ENCODE measurements at regions of chr16 and their contacts with region 1.

Region 1: DNA sequence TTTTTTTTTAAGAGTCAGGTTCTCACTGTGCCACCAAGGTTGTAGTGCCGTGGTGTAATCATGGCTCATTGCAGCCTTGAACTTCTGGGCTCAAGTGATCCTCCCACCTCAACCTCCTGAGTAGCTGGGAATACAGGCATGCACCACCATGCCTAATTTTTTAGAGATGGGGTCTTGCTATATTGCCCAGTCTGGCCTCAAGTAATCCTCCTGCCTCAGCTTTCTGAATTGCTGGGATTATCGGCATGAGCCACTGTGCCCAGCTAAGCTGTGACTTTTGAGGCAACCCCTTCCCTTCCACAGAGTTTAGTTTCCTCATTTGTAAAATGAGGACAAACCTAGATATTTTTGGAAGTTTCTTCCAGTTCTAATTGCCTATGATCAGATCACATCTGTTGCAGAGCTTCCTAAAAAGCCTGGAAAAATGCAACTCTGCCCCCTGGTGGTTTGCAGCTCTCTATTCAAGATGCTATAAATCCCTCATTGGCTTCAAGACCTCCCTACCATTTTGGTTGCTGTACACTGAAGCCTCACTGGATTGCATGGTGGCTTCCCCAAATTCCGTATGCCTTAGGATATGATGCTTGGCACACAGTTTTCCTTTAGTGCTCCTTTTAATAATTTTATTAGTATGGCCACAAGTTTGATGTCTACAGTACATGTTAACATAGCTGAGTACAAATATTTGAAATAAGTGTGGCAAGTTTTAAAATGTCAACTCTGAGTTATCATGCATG is 19.3 kb downstream of the GDE1 start:
- DNase-seq: no peak
- ATAC-seq: peak; percentile 84
- H3K4me3 ChIP-seq: no peak overlapping the region
- H3K27ac ChIP-seq: no peak overlapping the region
- H3K4me1 ChIP-seq: no peaks in the 10 kb centered on the region
- H3K27me3 ChIP-seq: no peaks in the 10 kb centered on the region
- CTCF ChIP-seq: peak; percentile 65 to 68 (median 67)
- EP300 ChIP-seq: no peak
- POLR2A ChIP-seq: no peak
- RAD21 ChIP-seq: peak; percentile 73

Region 2: GRCh38 chr16:19086322-19087199 is 416.0 kb before region 1 on chr16:
- CTCF ChIA-PET with region 1: interaction called, 23 read pairs
- POLR2A ChIA-PET with region 1: interaction called, 3 read pairs
- RAD21 ChIA-PET with region 1: interaction called, 5 read pairs
- SMC1A ChIA-PET with region 1: interaction called, 13 read pairs
- in situ Hi-C with region 1: loop called (anchors 5 kb)
- intact Hi-C with region 1: loop called (anchors 1 kb)
- DNase-seq: peak; percentile 20
- ATAC-seq: peak; percentile 100
- H3K4me3 ChIP-seq: peak overlapping the region; percentile 64; the same call in 1 of the 2 replicates
- H3K27ac ChIP-seq: no peak overlapping the region
- H3K4me1 ChIP-seq: peaks cover 3% of the 10 kb centered on the region; the same call in 1 of the 2 replicates
- H3K27me3 ChIP-seq: no peaks in the 10 kb centered on the region
- CTCF ChIP-seq: peak; percentile 95 to 96 (median 95)
- EP300 ChIP-seq: no peak
- POLR2A ChIP-seq: peak; percentile 43; the same call in 1 of the 2 replicates
- RAD21 ChIP-seq: peak; percentile 97

Region 3: GRCh38 chr16:19167710-19168370 is 334.7 kb before region 1 on chr16 and contains the start of gene SYT17:
- CTCF ChIA-PET with region 1: interaction called, 3 read pairs
- POLR2A ChIA-PET with region 1: no interaction called
- RAD21 ChIA-PET with region 1: interaction called, 4 read pairs
- SMC1A ChIA-PET with region 1: no interaction called
- in situ Hi-C with region 1: no loop called
- intact Hi-C with region 1: loop called (anchors 10 kb)
- DNase-seq: no peak
- ATAC-seq: peak; percentile 98
- H3K4me3 ChIP-seq: peak within 1 kb of the TSS; percentile 21; the same call in 1 of the 2 replicates
- H3K27ac ChIP-seq: no peak within 1 kb of the TSS
- H3K4me1 ChIP-seq: no peaks in the 10 kb centered on the region
- H3K27me3 ChIP-seq: no peaks in the 10 kb centered on the region; a peak in 1 of 4 replicates
- CTCF ChIP-seq: peak; percentile 68 to 83 (median 78)
- EP300 ChIP-seq: no peak
- POLR2A ChIP-seq: no peak
- RAD21 ChIP-seq: peak; percentile 75
- polyA plus RNA-seq, gene SYT17: 10.2 to 12.3 TPM

Region 4: DNA sequence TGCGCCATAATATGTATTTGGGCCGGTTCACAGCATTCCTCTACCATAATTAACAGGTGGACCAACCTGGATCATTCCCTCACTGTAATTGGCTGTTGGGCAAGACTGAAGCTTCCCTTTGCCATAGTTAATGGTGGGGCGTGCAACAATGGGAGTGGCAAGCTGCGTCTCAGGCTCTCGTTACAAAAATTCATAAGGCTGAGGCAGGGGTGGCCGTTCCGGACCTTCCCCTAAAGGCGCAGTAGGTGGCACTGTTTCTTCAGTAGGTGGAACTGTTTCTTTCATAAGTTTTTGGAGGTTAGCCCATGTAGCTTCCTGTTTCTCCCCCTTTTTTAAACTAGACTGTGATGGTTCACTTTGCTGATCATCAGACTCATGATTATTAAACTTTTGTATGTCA is 101.9 kb before region 1 on chr16:
- CTCF ChIA-PET with region 1: interaction called, 29 read pairs
- POLR2A ChIA-PET with region 1: no interaction called
- RAD21 ChIA-PET with region 1: no interaction called
- SMC1A ChIA-PET with region 1: interaction called, 7 read pairs
- in situ Hi-C with region 1: no loop called
- intact Hi-C with region 1: no loop called
- DNase-seq: no peak
- ATAC-seq: peak; percentile 40; the same call in 2 of the 3 replicates
- H3K4me3 ChIP-seq: no peak overlapping the region
- H3K27ac ChIP-seq: no peak overlapping the region
- H3K4me1 ChIP-seq: no peaks in the 10 kb centered on the region
- H3K27me3 ChIP-seq: peaks cover 0 to 2% of the 10 kb centered on the region in 2 experiments; a peak in 1 of 4 replicates
- CTCF ChIP-seq: peak; percentile 27 to 39 (median 27); a peak in 4 of 6 replicates
- EP300 ChIP-seq: no peak
- POLR2A ChIP-seq: no peak
- RAD21 ChIP-seq: peak; percentile 28

Region 5: GRCh38 chr16:19432429-19432828 is 70.1 kb before region 1 on chr16:
- CTCF ChIA-PET with region 1: no interaction called
- POLR2A ChIA-PET with region 1: no interaction called
- RAD21 ChIA-PET with region 1: no interaction called
- SMC1A ChIA-PET with region 1: no interaction called
- in situ Hi-C with region 1: no loop called
- intact Hi-C with region 1: no loop called
- DNase-seq: no peak
- ATAC-seq: no peak
- H3K4me3 ChIP-seq: no peak overlapping the region
- H3K27ac ChIP-seq: no peak overlapping the region
- H3K4me1 ChIP-seq: peaks cover 6% of the 10 kb centered on the region; the same call in 1 of the 2 replicates
- H3K27me3 ChIP-seq: no peaks in the 10 kb centered on the region
- CTCF ChIP-seq: no peak
- EP300 ChIP-seq: no peak
- POLR2A ChIP-seq: no peak
- RAD21 ChIP-seq: no peak

Region 6: DNA sequence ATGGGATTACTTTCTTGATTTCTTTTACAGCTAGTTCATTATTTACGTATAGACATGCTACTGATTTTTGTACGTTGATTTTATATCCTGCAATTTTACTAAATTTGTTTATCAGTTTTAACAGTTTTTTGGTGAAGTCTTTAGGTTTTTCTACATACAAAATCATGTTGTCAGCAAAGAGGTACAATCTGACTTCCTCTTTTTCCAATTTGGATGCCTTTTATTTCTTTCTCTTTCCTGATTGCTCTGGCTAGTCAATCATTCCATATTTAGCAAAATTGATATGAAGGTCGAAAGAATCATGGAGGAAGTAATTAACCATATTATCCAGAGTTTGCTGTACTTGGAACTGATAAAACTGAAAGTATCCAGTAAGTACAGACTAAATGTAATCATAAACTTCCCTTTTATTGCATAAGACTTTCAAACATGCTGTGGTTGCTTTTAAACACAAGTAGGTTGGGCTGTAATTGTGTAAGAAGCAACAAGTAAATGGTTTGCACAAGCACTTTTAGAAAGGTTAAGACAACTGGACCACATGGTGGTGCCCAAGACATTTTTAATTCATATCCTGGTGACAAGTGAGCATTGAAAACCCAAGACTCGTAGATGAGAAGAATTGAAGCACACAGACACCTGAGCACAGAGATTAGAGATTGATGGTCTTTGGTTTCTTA is 11.0 kb after region 1 on chr16:
- CTCF ChIA-PET with region 1: interaction called, 23 read pairs
- POLR2A ChIA-PET with region 1: no interaction called
- RAD21 ChIA-PET with region 1: interaction called, 7 read pairs
- SMC1A ChIA-PET with region 1: interaction called, 6 read pairs
- in situ Hi-C with region 1: no loop called
- intact Hi-C with region 1: no loop called
- DNase-seq: no peak
- ATAC-seq: no peak; the same call in 2 of the 3 replicates
- H3K4me3 ChIP-seq: no peak overlapping the region; the same call in 1 of the 2 replicates
- H3K27ac ChIP-seq: no peak overlapping the region
- H3K4me1 ChIP-seq: no peaks in the 10 kb centered on the region
- H3K27me3 ChIP-seq: no peaks in the 10 kb centered on the region
- CTCF ChIP-seq: no peak; a peak in 1 of 6 replicates
- EP300 ChIP-seq: no peak
- POLR2A ChIP-seq: no peak
- RAD21 ChIP-seq: no peak

Measured in GM12878 (cell line).